A673 (cell line): ENCODE measurements at regions of chr1 and their contacts with region 1.

Region 1: DNA sequence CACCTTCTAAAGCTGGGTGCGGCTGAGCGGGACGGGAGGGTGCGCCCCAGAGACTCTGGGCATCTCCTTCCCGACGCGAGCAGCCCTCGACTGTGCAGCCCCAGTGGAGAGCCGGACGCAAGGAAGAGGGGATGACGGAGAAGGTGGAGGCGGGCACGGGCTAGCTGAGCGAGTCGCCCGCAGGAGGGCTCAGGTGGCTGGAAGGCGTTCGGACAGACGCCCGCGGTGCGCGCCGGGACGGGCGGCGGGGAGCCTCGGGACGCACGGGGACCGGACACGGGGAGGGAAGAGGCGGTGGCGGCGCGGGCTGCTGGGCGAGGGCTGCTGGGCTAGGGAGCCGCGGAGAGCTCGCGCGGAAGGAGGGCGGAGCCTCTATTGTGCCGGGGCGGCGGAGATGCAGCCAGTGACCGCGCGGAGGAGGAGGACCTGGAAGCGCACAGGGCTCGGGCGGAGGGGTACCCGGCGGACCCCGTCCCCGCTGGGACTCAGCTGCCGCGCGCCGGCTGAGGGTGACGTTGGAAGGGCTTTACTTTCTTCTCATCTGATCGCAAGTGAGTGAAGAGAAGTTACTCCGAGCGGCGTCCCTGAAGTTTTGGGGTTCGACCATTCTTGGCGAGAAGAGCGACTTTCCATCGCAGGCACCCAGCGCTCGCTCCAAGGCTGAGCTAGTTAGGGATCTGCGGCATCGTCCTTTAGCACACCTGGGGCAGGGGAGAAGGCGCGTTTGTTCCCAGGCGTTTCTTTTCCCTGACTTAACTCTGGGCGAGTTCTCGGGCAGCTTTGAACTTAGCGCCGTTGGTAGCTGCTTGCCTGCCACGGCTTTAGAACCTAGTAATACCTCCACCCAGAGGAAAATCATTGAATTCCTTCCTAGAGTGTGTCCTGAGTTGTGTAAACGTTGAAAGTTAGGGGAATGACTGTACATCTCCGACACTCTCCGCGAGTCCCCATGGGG is at the start of gene OLFML2B:
- DNase-seq: peak; percentile 83
- H3K4me3 ChIP-seq: peak within 1 kb of the TSS; percentile 74
- H3K27ac ChIP-seq: no peak within 1 kb of the TSS
- H3K4me1 ChIP-seq: peaks cover 19% of the 10 kb centered on the region
- H3K27me3 ChIP-seq: peaks cover 5% of the 10 kb centered on the region
- CTCF ChIP-seq: peak; percentile 53
- total RNA-seq, gene OLFML2B: 3.4 and 3.7 TPM in 2 replicates

Region 2: DNA sequence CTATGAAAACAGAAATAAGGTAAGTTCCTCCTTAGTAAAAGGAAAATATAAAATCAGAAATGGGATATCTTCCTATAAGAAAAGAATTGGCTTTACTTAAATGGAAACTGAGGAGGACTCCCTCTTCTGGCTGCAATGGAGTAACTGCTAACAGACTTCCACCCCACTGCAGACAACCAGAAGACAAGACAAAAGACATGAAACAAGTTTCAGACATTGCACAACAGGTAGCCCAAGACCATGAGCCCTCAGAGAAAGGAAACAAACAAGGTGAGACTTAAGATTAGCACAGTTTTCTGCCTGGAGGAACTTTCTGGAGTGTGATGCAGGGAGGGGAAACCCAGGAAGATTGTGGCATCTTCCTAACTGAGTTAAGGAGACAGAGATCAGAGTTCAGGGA is 16.9 kb after region 1 on chr1:
- CTCF ChIA-PET with region 1: interaction called, 13 read pairs
- POLR2A ChIA-PET with region 1: interaction called, 6 read pairs
- intact Hi-C with region 1: no loop called
- DNase-seq: peak; percentile 67
- H3K4me3 ChIP-seq: no peak overlapping the region
- H3K27ac ChIP-seq: no peak overlapping the region
- H3K4me1 ChIP-seq: peaks cover 6% of the 10 kb centered on the region
- H3K27me3 ChIP-seq: no peaks in the 10 kb centered on the region
- CTCF ChIP-seq: peak; percentile 85